AG04449 (cell line): ENCODE measurements at regions of chr9 and their contacts with region 1.

Region 1: DNA sequence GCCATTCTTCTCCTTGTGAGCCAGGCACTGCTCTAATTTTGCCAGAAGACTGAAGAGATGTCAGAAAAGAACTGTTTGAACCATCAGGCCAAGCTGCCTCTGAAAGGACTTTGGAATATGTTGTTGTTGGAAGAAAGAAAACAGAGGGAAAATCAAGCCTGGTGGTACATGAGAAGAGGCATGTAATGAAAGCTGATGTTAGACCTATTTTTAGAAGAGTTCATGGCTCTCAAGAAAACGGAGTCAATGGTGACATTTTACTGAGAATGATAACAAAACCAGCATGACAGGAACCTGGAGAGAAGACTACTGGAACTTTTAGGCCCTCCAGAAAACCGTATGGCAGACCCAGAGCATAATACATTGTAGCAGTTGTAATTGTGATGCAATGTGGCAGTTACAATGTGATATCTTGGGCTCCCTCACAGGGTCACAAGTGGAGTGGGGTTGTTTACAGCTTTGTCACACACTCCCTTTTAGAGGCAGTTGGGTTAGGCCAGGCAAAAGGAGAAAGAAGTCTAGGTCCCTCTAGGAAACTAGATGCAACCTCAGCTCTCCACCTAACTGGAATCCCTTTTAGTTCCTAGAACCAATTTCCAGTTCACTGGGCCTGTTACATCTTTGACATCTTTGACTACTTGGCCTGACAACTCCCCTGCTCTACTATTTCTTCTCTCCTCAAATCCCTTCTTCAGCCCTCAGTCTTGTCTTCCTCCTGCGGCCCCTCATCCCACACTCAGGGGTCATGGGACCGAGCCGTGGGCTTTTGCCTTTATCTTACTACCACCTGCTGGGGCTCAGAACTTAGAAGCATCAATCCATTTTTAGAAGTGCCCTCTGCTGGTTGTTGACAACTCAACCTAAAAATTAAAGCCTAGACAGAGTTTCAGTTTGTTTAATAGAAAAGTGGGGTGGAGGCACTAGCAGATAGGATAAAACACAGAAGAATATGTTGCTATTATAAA is 61.2 kb upstream of the JAK2 start:
- DNase-seq: no peak
- H3K4me3 ChIP-seq: no peak overlapping the region
- CTCF ChIP-seq: peak; percentile 12

Region 2: GRCh38 chr9:4700091-4700490 is 223.8 kb before region 1 on chr9:
- CTCF ChIA-PET with region 1: no interaction called
- POLR2A ChIA-PET with region 1: no interaction called
- DNase-seq: no peak
- H3K4me3 ChIP-seq: no peak overlapping the region
- CTCF ChIP-seq: no peak

Region 3: DNA sequence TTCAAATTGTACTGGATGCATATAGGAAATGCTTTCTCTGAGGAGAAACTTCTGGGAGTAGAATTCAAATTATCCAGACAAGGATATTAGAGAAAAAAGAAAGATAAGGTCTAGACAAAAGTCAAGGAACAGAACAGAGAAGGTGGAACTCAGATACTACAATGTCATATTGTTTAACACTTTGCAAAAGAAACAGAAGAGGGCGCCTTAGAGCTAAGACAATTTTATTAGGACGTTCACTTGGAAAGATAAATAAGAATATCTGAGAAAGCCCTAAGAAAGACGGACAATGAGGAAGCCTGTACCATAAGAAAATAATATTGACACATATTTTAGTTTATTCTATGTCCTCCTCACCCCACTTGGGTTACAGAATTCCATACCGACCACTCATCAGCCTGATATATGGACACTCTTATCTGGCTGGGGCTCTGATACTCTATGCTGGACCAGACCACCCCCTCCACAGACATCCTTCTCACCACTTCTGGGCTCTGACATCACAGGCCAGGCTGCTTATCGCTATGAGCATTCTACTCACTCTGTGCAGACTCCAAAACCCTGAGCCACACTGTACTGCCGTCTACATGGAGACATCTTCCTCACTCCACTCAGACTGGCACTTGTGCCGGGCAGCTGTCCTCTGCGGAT is 173.7 kb before region 1 on chr9:
- CTCF ChIA-PET with region 1: interaction called, 10 read pairs
- POLR2A ChIA-PET with region 1: no interaction called
- DNase-seq: no peak
- H3K4me3 ChIP-seq: no peak overlapping the region
- CTCF ChIP-seq: peak; percentile 40

Region 4: GRCh38 chr9:4939118-4939561 is 15.3 kb after region 1 on chr9:
- CTCF ChIA-PET with region 1: interaction called, 11 read pairs
- POLR2A ChIA-PET with region 1: no interaction called
- DNase-seq: no peak
- H3K4me3 ChIP-seq: no peak overlapping the region
- CTCF ChIP-seq: no peak

Region 5: GRCh38 chr9:5062631-5063030 is 138.8 kb after region 1 on chr9:
- CTCF ChIA-PET with region 1: no interaction called
- POLR2A ChIA-PET with region 1: no interaction called
- DNase-seq: no peak
- H3K4me3 ChIP-seq: no peak overlapping the region
- CTCF ChIP-seq: no peak